ENCODE measurements at regions of chr18 and their contacts with region 1.

Region 1: GRCh38 chr18:22667616-22668422 is 250.1 kb upstream of the CTAGE1 start:
- DNase-seq: no peak
- ATAC-seq: no peak
- H3K4me3 ChIP-seq: no peak overlapping the region
- H3K27ac ChIP-seq: no peak overlapping the region
- H3K4me1 ChIP-seq: no peaks in the 10 kb centered on the region
- H3K27me3 ChIP-seq: no peaks in the 10 kb centered on the region
- CTCF ChIP-seq: no peak

Region 2: GRCh38 chr18:22613058-22613691 is 54.6 kb before region 1 on chr18:
- CTCF ChIA-PET with region 1: no interaction called
- POLR2A ChIA-PET with region 1: no interaction called
- in situ Hi-C with region 1: no loop called
- intact Hi-C with region 1: no loop called
- DNase-seq: no peak
- ATAC-seq: no peak
- H3K4me3 ChIP-seq: no peak overlapping the region
- H3K27ac ChIP-seq: no peak overlapping the region
- H3K4me1 ChIP-seq: no peaks in the 10 kb centered on the region
- H3K27me3 ChIP-seq: no peaks in the 10 kb centered on the region; the same call in none of the 2 replicates
- CTCF ChIP-seq: no peak

Region 3: GRCh38 chr18:22627526-22627925 is 40.3 kb before region 1 on chr18:
- CTCF ChIA-PET with region 1: no interaction called
- POLR2A ChIA-PET with region 1: interaction called, 16 read pairs
- in situ Hi-C with region 1: no loop called
- intact Hi-C with region 1: no loop called
- DNase-seq: no peak
- ATAC-seq: no peak
- H3K4me3 ChIP-seq: no peak overlapping the region
- H3K27ac ChIP-seq: no peak overlapping the region
- H3K4me1 ChIP-seq: no peaks in the 10 kb centered on the region
- H3K27me3 ChIP-seq: peaks cover 3% of the 10 kb centered on the region; the same call in 1 of the 2 replicates
- CTCF ChIP-seq: no peak

Measured in Panc1 (cell line).